Left cardiac atrium (tissue), 4 donors: ENCODE measurements at regions of chr6 and their contacts with region 1.

Region 1: DNA sequence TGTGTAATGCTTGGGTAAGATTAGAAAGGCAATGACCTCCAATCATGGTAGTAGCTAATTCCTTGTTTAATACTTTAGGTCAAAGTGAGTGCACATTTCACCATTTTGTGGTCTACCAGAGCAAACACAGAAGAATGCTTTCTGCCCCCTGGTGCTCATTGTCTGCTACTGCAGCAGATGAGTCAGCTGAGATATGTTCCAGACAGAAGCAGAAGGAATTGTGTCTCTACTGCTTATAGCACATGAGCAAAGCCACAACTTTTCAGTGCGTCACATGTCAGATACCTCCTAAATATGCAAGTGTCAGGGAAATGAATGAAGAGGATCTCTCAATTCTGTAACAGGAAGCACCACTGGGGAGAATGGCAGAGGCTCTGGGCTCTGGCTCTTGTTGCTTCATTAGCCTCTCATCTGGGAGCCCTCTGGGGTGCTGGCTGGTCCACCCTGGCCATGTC is 308.9 kb downstream of the ALDH8A1 start:
- DNase-seq: peak; percentile 74
- ATAC-seq: peak; percentile 88 to 95

Region 2: DNA sequence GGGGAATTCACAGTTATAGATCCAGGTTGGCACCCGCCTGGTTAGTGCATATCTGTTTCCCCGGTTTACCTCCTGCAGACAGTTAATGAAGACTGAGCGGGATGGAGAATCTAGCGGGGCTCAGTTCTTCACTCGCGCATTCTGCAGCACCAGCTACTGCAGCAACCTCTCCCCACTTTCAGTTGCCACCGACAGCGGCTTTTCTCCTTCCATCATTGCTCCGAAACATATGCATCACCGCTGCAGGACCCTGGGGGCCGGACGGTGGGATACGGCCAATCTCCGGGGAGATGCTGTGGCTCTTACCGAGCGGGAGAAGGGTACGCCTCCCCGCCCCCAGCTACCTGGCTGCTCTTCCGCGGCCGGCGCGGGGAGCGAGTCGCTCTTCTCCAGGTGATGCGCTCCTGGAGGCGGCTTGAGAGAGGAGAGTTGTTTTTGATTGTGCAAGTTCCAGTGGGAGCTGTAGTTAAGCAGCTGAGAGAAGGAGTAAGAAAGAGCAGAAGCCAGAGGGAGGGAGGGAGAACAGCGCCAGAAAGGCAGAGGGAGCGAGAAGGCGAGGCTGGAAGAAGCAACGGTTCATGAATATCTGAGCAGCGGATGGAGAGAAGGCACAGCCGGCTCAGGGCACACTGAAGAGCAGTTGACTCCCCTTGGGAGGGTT is 323.4 kb before region 1 on chr6 and contains the start of gene SGK1:
- intact Hi-C with region 1: no loop called
- DNase-seq: no peak
- ATAC-seq: peak; percentile 78 to 92
- total RNA-seq, gene SGK1: 42.3 to 104 TPM

Region 3: GRCh38 chr6:134517145-134517658 is 123.8 kb before region 1 on chr6:
- intact Hi-C with region 1: loop called in 1 of 2 experiments (anchors 5 kb)
- DNase-seq: peak; percentile 84
- ATAC-seq: peak; percentile 94 to 96